Activated naive CD4-positive, alpha-beta T cell treated with anti-CD3 and anti-CD28 coated beads for 36 hours (primary cell): ENCODE measurements at regions of chr12 and their contacts with region 1.

Region 1: GRCh38 chr12:92784795-92785562 is 82.2 kb downstream of the PLEKHG7 start:
- DNase-seq: peak; percentile 35
- H3K4me3 Mint-ChIP-seq: no peak overlapping the region
- H3K27ac Mint-ChIP-seq: no peak overlapping the region
- H3K4me1 Mint-ChIP-seq: peaks cover 2% of the 10 kb centered on the region
- H3K27me3 Mint-ChIP-seq: no peaks in the 10 kb centered on the region

Region 2: GRCh38 chr12:92753976-92754885 is 30.7 kb before region 1 on chr12:
- CTCF ChIA-PET with region 1: no interaction called
- intact Hi-C with region 1: no loop called
- DNase-seq: no peak
- H3K4me3 Mint-ChIP-seq: no peak overlapping the region
- H3K27ac Mint-ChIP-seq: no peak overlapping the region
- H3K4me1 Mint-ChIP-seq: no peaks in the 10 kb centered on the region
- H3K27me3 Mint-ChIP-seq: peaks cover 16% of the 10 kb centered on the region

Region 3: GRCh38 chr12:92899388-92900001 is 114.5 kb after region 1 on chr12:
- CTCF ChIA-PET with region 1: no interaction called
- intact Hi-C with region 1: no loop called
- DNase-seq: no peak
- H3K4me3 Mint-ChIP-seq: no peak overlapping the region
- H3K27ac Mint-ChIP-seq: no peak overlapping the region
- H3K4me1 Mint-ChIP-seq: peaks cover 23% of the 10 kb centered on the region
- H3K27me3 Mint-ChIP-seq: no peaks in the 10 kb centered on the region

Region 4: GRCh38 chr12:92973601-92974000 is 188.6 kb after region 1 on chr12:
- CTCF ChIA-PET with region 1: no interaction called
- intact Hi-C with region 1: no loop called
- DNase-seq: no peak
- H3K4me3 Mint-ChIP-seq: no peak overlapping the region
- H3K27ac Mint-ChIP-seq: peak overlapping the region; percentile 34
- H3K4me1 Mint-ChIP-seq: peaks cover 21% of the 10 kb centered on the region
- H3K27me3 Mint-ChIP-seq: no peaks in the 10 kb centered on the region

Region 5: DNA sequence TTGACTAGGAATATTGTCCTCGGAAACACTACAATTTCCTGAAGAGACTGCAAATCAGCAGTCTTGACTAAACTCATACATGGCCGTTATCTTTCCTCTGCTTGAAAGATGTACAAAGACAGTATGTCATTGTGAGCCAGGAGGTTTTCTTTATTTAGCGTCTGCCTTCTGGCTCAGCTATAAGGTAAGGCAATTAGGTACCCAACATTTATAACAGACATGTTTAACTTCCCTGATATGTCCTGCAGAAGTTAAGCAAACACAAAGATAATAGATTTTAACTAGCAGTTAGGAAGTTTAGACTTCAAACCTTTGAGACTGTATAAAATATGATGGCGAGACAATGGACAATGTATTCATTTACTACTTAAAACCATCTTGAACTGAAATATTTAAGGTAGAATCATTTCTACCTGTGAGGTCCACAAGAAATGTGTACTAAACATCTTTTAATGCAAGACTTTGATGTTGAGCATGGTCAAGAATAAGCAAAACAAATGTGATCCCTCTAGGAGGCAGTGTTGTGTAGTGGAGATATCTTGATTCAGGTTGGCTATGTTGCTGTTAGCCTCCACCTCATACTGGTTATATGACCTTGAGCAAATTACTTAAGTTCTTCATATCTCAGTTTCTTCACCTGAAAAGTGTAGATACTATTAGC is 240.3 kb after region 1 on chr12:
- CTCF ChIA-PET with region 1: no interaction called
- intact Hi-C with region 1: loop called (anchors 1 kb)
- DNase-seq: no peak
- H3K4me3 Mint-ChIP-seq: no peak overlapping the region
- H3K27ac Mint-ChIP-seq: no peak overlapping the region
- H3K4me1 Mint-ChIP-seq: no peaks in the 10 kb centered on the region
- H3K27me3 Mint-ChIP-seq: peaks cover 3% of the 10 kb centered on the region